Naive thymus-derived CD4-positive, alpha-beta T cell (primary cell): ENCODE measurements at regions of chr7 and their contacts with region 1.

Region 1: DNA sequence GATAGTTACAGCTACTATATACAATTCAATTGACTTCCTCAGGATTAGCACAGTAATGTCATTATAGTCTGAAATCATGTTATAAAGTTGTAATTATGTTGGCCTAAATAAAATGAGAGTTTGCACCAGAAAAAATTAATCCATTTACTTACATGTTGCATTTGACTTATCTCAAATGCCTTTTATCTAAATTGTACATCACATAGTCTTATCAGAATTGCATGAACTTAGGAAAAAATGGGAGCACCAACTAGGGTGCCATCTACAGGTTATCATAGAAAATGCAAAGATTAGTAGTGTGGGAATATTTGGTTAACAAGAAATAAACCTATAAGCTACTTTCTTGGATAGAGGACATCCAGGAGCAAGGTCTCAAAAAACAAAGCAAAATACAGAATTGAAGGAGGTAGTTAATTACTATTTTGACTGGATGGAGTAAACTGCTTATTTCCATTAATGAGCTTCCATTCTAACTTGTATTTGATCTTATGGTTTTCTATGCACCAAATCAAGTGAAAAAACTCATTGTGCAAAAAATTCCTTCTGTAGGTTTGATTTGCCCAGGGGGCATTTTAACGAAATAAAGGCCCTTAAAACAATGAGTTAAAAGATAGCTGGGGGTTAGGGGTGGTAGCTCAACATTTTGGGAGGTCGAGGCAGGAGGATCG is 60.0 kb upstream of the ORC5 start:
- DNase-seq: no peak
- ATAC-seq: no peak
- H3K4me3 ChIP-seq: no peak overlapping the region
- H3K4me3 Mint-ChIP-seq: no peak overlapping the region
- H3K27ac ChIP-seq: no peak overlapping the region
- H3K27ac Mint-ChIP-seq: no peak overlapping the region
- H3K4me1 ChIP-seq: no peaks in the 10 kb centered on the region
- H3K4me1 Mint-ChIP-seq: no peaks in the 10 kb centered on the region
- H3K27me3 ChIP-seq: no peaks in the 10 kb centered on the region
- H3K27me3 Mint-ChIP-seq: peaks cover 10 to 34% (median 28%) of the 10 kb centered on the region in 5 donors

Region 2: DNA sequence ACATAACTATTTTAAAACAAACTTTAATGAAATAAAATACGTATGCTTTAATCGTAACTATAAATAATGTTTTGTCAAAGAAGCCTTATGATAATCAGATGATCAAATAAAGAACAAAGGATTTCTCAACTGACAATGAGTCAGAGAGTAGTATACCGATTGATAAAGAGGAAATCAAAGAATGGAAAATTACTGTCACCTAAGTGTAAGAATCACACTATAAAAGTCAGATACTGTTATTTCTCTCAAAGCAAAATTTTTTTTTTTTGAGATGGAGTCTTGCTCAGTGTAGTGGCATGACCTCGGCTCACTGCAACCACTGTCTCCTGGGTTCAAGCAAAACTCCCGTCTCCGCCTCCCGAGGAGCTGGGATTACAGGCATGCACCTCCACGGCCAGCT is 942.1 kb before region 1 on chr7:
- CTCF ChIA-PET with region 1: no interaction called
- POLR2A ChIA-PET with region 1: no interaction called
- intact Hi-C with region 1: no loop called
- DNase-seq: no peak
- ATAC-seq: no peak
- H3K4me3 ChIP-seq: no peak overlapping the region
- H3K4me3 Mint-ChIP-seq: no peak overlapping the region
- H3K27ac ChIP-seq: no peak overlapping the region
- H3K27ac Mint-ChIP-seq: peak overlapping the region in 4 of 9 donors; percentile 30 to 83 (median 48)
- H3K4me1 ChIP-seq: no peaks in the 10 kb centered on the region
- H3K4me1 Mint-ChIP-seq: peaks cover 0 to 13% (median 6%) of the 10 kb centered on the region in 7 donors
- H3K27me3 ChIP-seq: no peaks in the 10 kb centered on the region
- H3K27me3 Mint-ChIP-seq: no peaks in the 10 kb centered on the region

Region 3: GRCh38 chr7:103573479-103574058 is 694.3 kb before region 1 on chr7:
- CTCF ChIA-PET with region 1: no interaction called
- POLR2A ChIA-PET with region 1: no interaction called
- intact Hi-C with region 1: loop called in 1 of 2 experiments (anchors 5 kb)
- DNase-seq: peak in 6 of 9 donors; percentile 3 to 35 (median 23)
- ATAC-seq: no peak
- H3K4me3 ChIP-seq: no peak overlapping the region
- H3K4me3 Mint-ChIP-seq: no peak overlapping the region
- H3K27ac ChIP-seq: no peak overlapping the region
- H3K27ac Mint-ChIP-seq: no peak overlapping the region
- H3K4me1 ChIP-seq: no peaks in the 10 kb centered on the region
- H3K4me1 Mint-ChIP-seq: no peaks in the 10 kb centered on the region
- H3K27me3 ChIP-seq: no peaks in the 10 kb centered on the region
- H3K27me3 Mint-ChIP-seq: peaks cover 11 to 19% (median 15%) of the 10 kb centered on the region in 5 donors

Region 4: GRCh38 chr7:103934508-103934907 is 333.3 kb before region 1 on chr7:
- CTCF ChIA-PET with region 1: no interaction called
- POLR2A ChIA-PET with region 1: no interaction called
- intact Hi-C with region 1: no loop called
- DNase-seq: no peak
- ATAC-seq: no peak
- H3K4me3 ChIP-seq: no peak overlapping the region
- H3K4me3 Mint-ChIP-seq: no peak overlapping the region
- H3K27ac ChIP-seq: no peak overlapping the region
- H3K27ac Mint-ChIP-seq: no peak overlapping the region
- H3K4me1 ChIP-seq: no peaks in the 10 kb centered on the region
- H3K4me1 Mint-ChIP-seq: no peaks in the 10 kb centered on the region
- H3K27me3 ChIP-seq: no peaks in the 10 kb centered on the region
- H3K27me3 Mint-ChIP-seq: peaks cover 0 to 36% (median 23%) of the 10 kb centered on the region in 5 donors

Region 5: DNA sequence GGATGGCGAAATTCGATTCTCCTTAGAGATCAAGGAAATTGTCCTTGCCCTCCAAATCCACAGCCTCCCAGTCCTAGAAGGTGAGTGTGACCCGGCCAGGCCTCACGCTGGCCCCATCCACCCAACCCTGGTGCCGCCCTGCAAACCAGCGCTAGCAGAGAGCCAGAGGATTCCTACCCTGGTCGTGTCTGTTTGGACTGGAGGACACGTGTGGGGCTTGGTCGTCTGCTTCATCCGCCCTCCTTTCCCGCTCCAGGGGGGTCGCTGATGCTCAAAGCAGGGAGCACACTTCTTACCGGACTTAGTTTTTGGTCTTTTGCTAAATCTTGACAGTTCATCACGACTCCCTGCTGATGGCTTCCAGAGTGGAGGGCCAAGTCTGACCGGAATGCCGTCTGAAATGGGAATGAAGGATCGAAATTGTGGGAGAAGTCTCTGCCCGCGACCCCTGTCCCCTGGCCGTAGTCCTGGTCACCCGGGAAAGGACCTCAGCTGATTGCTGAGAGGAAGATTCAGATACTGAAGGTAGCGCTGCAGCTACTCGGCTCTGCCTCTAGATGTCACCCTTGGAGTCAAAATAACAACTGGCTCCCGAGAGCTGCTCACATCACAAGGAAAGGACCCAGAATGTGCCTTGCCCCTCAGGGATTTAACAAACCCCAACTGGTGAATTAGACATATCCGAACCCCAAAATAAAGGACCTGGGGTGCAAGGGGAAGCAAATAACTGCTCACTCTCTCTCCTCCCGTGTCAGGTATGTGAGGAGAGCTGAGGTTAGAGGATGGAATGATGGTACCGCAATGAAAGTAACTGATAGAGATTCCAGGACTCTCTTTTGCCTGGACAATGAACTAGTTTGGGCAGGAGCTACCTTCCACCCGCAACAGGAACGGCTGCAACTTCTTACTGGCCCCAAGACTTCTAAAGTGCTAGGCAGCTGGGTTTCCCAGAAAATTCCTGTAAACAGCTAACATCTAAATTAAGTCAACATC is 36.5 kb before region 1 on chr7:
- CTCF ChIA-PET with region 1: interaction called, 7 read pairs
- POLR2A ChIA-PET with region 1: no interaction called
- intact Hi-C with region 1: loop called in 1 of 2 experiments (anchors 1 kb)
- DNase-seq: peak; percentile 10 to 46 (median 28)
- ATAC-seq: peak; percentile 86
- H3K4me3 ChIP-seq: no peak overlapping the region
- H3K4me3 Mint-ChIP-seq: no peak overlapping the region
- H3K27ac ChIP-seq: no peak overlapping the region
- H3K27ac Mint-ChIP-seq: peak overlapping the region in 1 of 9 donors; percentile 51
- H3K4me1 ChIP-seq: no peaks in the 10 kb centered on the region
- H3K4me1 Mint-ChIP-seq: peaks cover 0 to 5% (median 0%) of the 10 kb centered on the region in 7 donors
- H3K27me3 ChIP-seq: no peaks in the 10 kb centered on the region
- H3K27me3 Mint-ChIP-seq: peaks cover 16 to 37% (median 30%) of the 10 kb centered on the region in 5 donors